HepG2 (cell line): ENCODE measurements at regions of chr16 and their contacts with region 1.

Region 1: DNA sequence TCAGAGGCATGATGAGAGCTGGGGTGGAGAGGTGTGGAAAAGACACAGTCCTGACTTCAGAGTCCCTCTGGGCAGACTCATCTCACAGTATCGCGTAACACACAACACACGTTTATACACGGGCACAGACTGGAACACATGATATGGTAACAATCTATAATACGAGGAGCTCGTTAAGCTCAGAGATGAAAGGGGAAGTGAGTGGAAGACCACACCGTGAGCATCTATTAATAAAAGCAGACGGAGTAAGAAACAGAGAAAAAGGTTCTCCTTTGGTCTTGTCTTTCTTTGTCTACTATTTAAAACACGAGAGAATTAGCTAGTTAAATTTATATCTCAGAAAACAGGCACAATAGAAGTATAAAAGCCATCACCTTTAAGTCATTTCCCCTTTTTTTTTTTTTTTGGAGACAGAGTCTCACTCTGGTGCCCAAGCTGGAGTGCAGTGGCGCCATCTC is 13.5 kb downstream of the ANKRD11 start:
- DNase-seq: no peak
- ATAC-seq: no peak
- H3K4me3 ChIP-seq: no peak overlapping the region
- H3K27ac ChIP-seq: no peak overlapping the region
- H3K4me1 ChIP-seq: peaks cover 92% of the 10 kb centered on the region
- H3K27me3 ChIP-seq: no peaks in the 10 kb centered on the region
- CTCF ChIP-seq: no peak
- EP300 ChIP-seq: no peak
- POLR2A ChIP-seq: no peak
- RAD21 ChIP-seq: no peak

Region 2: DNA sequence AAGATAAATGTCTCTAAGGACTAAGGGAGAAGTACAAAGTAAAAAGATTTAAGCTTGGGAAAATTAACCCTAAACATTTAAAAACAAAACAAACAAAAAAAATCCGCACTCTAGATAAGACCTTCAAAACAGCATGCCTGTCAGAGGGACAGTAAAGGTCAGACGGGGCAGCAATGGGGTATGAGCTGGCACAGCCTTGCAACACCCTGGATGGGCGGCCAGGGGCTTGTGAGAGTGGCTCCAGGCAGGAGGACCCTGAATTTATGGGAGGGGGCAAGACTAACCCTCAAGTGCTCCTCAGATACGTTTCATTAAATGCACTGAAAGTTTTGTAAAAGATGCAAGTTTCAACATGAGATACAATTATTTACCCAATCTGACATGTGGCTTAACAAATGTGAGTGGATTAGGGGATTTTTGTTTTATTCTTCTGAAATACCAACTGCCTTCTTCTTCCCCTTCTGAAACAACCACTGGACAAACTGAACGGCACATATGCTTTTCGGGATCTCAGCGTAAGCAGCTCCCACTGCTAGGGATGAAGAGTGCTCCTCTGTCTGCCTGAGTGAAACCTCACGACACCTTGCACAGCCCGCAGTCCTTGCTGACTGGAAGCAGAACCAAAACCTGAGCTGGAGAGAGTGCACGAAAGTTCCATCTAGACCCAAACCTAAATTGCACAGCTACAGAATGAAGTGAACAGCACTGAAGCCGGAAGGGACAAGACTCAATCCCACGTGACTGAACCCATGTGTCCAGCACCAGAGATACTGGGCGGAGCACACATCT is 114.9 kb before region 1 on chr16:
- CTCF ChIA-PET with region 1: no interaction called
- POLR2A ChIA-PET with region 1: no interaction called
- in situ Hi-C with region 1: no loop called
- intact Hi-C with region 1: no loop called
- DNase-seq: no peak
- ATAC-seq: no peak
- H3K4me3 ChIP-seq: no peak overlapping the region
- H3K27ac ChIP-seq: no peak overlapping the region
- H3K4me1 ChIP-seq: peaks cover 52% of the 10 kb centered on the region
- H3K27me3 ChIP-seq: no peaks in the 10 kb centered on the region
- CTCF ChIP-seq: no peak
- EP300 ChIP-seq: no peak
- POLR2A ChIP-seq: no peak
- RAD21 ChIP-seq: no peak

Region 3: DNA sequence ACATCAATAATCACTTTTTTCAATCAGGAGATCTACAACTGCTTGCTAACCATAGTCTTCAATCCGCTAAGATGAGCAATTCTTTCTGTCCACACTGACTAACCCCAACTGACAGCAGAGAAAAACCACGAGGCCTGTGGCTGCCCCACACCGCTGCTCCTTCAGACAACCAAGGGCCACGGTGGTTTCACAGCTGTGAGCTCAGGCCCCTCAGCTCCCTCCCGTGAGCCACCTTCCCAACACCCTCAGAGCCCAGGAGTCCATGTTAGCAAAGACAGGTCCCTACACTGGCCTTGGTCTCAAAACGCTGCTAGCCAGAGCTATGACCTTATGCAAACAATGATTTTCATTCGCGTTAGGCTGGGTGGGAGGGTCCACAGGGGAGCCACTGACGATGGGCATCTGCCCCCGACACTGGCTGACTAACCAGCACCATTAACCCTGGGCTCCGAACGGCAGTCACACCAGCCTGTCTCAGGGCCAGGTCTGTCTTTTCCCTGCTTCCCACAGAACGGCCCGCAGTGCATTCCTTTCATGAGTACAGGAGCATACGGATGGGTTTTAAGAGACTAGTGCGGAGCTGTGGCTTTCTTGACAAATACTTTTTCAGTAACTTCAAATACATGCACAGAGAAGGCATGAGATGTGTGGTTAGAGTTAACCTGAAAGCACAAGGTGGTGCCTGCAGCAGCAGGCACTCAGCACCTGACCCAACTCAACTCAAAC is 53.8 kb before region 1 on chr16:
- CTCF ChIA-PET with region 1: no interaction called
- POLR2A ChIA-PET with region 1: interaction called, 3 read pairs
- in situ Hi-C with region 1: no loop called
- intact Hi-C with region 1: loop called (anchors 5 kb)
- DNase-seq: peak; percentile 92
- ATAC-seq: peak; percentile 95
- H3K4me3 ChIP-seq: peak overlapping the region in 1 of 3 experiments; percentile 26; a peak in 2 of 6 replicates
- H3K27ac ChIP-seq: peak overlapping the region; percentile 65
- H3K4me1 ChIP-seq: peaks cover 75% of the 10 kb centered on the region
- H3K27me3 ChIP-seq: no peaks in the 10 kb centered on the region
- CTCF ChIP-seq: peak; percentile 7; the same call in 1 of the 2 replicates
- EP300 ChIP-seq: 0 out of 4 replicates have a peak, but pooled peaks have one; percentile 3 to 38
- POLR2A ChIP-seq: peak in 1 of 2 experiments; percentile 86; a peak in 3 of 4 replicates
- RAD21 ChIP-seq: peak; percentile 18

Region 4: GRCh38 chr16:89452241-89452640 is 24.6 kb before region 1 on chr16:
- CTCF ChIA-PET with region 1: no interaction called
- POLR2A ChIA-PET with region 1: no interaction called
- in situ Hi-C with region 1: no loop called
- intact Hi-C with region 1: no loop called
- DNase-seq: no peak
- ATAC-seq: no peak
- H3K4me3 ChIP-seq: no peak overlapping the region
- H3K27ac ChIP-seq: no peak overlapping the region
- H3K4me1 ChIP-seq: peaks cover 80% of the 10 kb centered on the region
- H3K27me3 ChIP-seq: no peaks in the 10 kb centered on the region
- CTCF ChIP-seq: no peak
- EP300 ChIP-seq: no peak
- POLR2A ChIP-seq: no peak
- RAD21 ChIP-seq: no peak